Activated B cell treated with CpG ODN at 0.5 μM for 24 hours (primary cell): ENCODE measurements at regions of chr19 and their contacts with region 1.

Region 1: GRCh38 chr19:18203863-18204393 is at the start of gene RAB3A:
- DNase-seq: peak; percentile 95
- ATAC-seq: peak; percentile 86
- H3K4me3 Mint-ChIP-seq: peak within 1 kb of the TSS; percentile 92
- H3K27ac Mint-ChIP-seq: peak within 1 kb of the TSS; percentile 87
- H3K4me1 Mint-ChIP-seq: peaks cover 29% of the 10 kb centered on the region
- H3K27me3 Mint-ChIP-seq: peaks cover 5% of the 10 kb centered on the region
- CTCF ChIP-seq: no peak
- total RNA-seq, gene RAB3A: 3.8 and 4.1 TPM in 2 replicates

Region 2: DNA sequence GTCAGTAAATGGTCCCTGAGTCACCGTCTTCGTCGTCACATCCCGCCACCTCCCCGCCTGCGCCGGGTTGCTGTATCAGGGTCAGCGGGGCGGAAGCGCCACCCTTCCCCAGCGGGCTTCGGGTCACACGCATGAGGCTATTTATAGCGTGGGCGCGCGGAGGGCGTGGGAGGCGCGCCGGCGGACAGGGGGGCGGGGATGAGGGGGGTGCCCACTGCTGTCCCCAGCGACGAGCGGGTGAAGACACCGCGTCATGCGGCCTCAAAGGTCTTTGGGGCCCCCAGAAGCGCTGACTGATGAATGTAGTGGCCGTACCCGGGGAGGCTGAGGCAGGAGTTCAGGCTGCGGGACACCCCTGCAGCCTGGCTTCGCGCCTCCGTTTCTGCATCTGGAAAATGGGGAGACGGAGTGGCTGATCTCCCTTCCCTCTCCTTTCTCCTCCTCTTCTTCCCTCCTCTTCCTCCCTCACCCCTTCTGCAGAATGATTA is 523.6 kb before region 1 on chr19:
- CTCF ChIA-PET with region 1: no interaction called
- POLR2A ChIA-PET with region 1: interaction called, 13 read pairs
- intact Hi-C with region 1: no loop called
- DNase-seq: peak; percentile 61
- ATAC-seq: peak; percentile 90
- H3K4me3 Mint-ChIP-seq: peak overlapping the region; percentile 73
- H3K27ac Mint-ChIP-seq: peak overlapping the region; percentile 30
- H3K4me1 Mint-ChIP-seq: peaks cover 14% of the 10 kb centered on the region
- H3K27me3 Mint-ChIP-seq: peaks cover 55% of the 10 kb centered on the region
- CTCF ChIP-seq: no peak

Region 3: DNA sequence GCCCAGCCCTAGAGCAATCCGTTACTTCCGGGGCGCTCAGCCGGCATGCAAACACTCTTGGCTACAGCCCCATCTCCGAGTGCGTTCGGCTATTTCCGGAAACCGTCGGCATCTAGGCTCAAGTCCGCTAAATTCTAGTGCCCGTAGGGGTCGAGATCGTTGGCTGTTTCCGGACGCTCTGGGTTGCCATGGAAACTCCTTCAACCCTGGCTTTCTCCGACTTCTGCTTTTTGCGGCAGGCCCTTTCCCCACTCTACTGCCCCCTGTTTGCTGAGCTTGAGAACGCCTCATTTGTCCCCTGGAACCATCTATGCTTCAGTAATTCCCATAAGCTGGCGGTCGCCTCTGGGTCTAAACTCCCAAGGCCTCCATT is 51.5 kb before region 1 on chr19:
- CTCF ChIA-PET with region 1: no interaction called
- POLR2A ChIA-PET with region 1: interaction called, 8 read pairs
- intact Hi-C with region 1: loop called (anchors 1 kb)
- DNase-seq: peak; percentile 97
- ATAC-seq: peak; percentile 70
- H3K4me3 Mint-ChIP-seq: peak overlapping the region; percentile 89
- H3K27ac Mint-ChIP-seq: peak overlapping the region; percentile 94
- H3K4me1 Mint-ChIP-seq: peaks cover 22% of the 10 kb centered on the region
- H3K27me3 Mint-ChIP-seq: no peaks in the 10 kb centered on the region
- CTCF ChIP-seq: no peak

Region 4: DNA sequence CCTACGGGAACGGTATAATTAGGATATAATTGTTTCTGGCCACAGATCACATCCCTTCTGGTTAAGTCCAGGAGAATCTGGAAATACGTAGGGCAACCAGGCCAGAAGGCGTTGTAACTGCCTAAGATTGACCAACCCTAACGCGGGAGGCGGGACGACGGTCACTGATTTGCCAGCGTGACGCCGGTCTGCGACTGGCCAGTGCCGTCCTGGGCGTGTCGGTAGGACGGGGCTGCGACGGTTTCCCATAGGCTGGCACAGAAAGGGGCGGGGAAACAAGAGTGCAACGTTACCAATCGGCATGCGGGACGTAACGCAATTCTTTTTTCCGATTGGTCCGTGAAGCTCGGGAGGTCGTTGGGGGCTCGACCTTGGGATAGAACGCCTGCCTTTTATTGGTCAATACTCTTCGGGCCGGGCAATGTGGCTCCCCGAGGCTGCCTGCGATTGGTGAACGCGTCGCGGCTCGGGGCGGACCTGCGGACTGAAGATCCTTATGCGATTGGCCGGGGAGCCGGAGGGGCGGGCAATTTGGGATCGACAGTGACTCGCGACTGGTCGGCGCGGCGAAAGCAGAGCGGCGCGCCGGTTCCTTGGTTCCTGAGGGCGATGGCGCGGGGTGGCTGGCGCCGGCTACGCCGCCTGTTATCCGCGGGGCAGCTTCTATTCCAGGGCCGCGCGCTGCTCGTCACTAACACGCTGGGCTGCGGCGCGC is 11.1 kb before region 1 on chr19 and contains the start of gene MPV17L2:
- CTCF ChIA-PET with region 1: interaction called, 12 read pairs
- POLR2A ChIA-PET with region 1: interaction called, 112 read pairs
- intact Hi-C with region 1: loop called (anchors 1 kb)
- DNase-seq: peak; percentile 90
- ATAC-seq: peak; percentile 83
- H3K4me3 Mint-ChIP-seq: peak within 1 kb of the TSS; percentile 87
- H3K27ac Mint-ChIP-seq: peak within 1 kb of the TSS; percentile 95
- H3K4me1 Mint-ChIP-seq: peaks cover 40% of the 10 kb centered on the region
- H3K27me3 Mint-ChIP-seq: no peaks in the 10 kb centered on the region
- CTCF ChIP-seq: no peak
- total RNA-seq, gene MPV17L2: 17.3 and 17.9 TPM in 2 replicates

Region 5: DNA sequence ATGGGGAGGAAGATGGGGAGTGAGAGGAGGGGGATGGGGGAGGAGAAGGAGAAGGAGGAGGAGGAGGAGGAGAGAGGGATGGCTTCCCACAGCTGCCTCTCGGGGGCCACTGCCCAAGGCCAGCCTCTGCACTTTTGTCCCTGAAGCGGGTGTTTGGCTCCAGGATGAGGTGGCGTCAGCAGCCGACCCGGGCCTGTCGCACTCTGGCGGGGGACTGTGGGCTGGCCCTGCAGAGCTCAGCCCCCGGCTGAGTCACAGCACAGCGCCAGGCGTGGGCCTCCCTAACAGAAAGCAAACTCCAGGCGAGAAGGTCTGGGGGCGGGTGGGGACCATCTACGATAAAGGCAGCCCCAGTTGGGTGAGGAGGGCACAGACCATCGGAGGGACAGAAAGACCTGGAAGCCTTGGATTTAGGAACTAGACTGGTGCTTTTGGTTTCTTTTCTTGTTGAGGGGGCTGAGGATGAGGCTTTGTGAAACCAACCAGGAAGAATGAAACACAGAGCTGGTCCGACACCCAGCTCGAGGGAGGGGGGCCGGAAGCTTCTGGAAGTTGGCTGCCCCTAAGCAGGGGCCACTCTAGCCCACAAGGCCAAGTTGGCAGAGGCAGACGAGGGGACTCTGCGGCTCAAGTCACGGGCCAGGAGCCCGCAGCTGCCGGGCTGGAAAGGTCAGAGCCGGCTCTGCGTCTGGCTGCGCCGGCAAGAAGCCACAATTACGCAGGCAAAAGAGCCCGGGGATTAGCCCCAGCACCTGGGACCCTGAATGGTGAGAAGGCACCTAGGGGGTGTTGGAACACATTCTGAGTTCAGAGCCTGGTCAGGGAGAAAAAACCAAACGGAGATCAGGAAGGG is 100.8 kb after region 1 on chr19:
- CTCF ChIA-PET with region 1: no interaction called
- POLR2A ChIA-PET with region 1: interaction called, 13 read pairs
- intact Hi-C with region 1: no loop called
- DNase-seq: peak; percentile 74
- ATAC-seq: peak; percentile 73
- H3K4me3 Mint-ChIP-seq: peak overlapping the region; percentile 85
- H3K27ac Mint-ChIP-seq: peak overlapping the region; percentile 95
- H3K4me1 Mint-ChIP-seq: peaks cover 54% of the 10 kb centered on the region
- H3K27me3 Mint-ChIP-seq: no peaks in the 10 kb centered on the region
- CTCF ChIP-seq: no peak

Region 6: DNA sequence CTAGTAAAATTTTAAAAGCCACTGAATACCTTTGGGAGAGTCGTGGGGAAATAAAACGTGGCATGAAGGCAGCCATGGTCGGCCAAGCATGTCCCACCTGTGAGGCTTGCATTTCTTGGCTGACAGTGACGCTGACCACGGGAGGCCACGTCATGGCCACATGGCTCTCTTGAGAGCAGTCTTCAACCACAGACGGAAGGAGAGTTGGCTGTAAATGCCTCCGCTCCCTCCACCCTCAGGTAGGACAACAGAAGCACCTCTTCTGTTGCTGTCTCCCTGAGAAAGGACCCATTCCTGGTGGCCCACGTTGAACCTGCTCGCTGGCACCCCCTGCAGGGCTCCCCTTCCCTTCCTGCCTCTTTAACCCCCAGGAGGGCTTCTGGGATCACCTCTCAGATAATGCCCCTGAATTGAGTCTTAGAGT is 204.1 kb after region 1 on chr19:
- CTCF ChIA-PET with region 1: interaction called, 3 read pairs
- POLR2A ChIA-PET with region 1: no interaction called
- intact Hi-C with region 1: loop called (anchors 1 kb)
- DNase-seq: peak; percentile 81
- ATAC-seq: peak; percentile 88
- H3K4me3 Mint-ChIP-seq: peak overlapping the region; percentile 53
- H3K27ac Mint-ChIP-seq: peak overlapping the region; percentile 76
- H3K4me1 Mint-ChIP-seq: peaks cover 24% of the 10 kb centered on the region
- H3K27me3 Mint-ChIP-seq: peaks cover 18% of the 10 kb centered on the region
- CTCF ChIP-seq: no peak